ENCODE measurements at regions of chr15 and their contacts with region 1.

Region 1: GRCh38 chr15:40108855-40109735 is at the start of gene BMF:
- DNase-seq: peak; percentile 98 to 99
- H3K4me3 ChIP-seq: peak within 1 kb of the TSS; percentile 61
- H3K4me3 Mint-ChIP-seq: peak within 1 kb of the TSS; percentile 93
- H3K27ac Mint-ChIP-seq: peak within 1 kb of the TSS; percentile 96
- H3K4me1 ChIP-seq: peaks cover 34% of the 10 kb centered on the region
- H3K4me1 Mint-ChIP-seq: peaks cover 34% of the 10 kb centered on the region
- H3K27me3 ChIP-seq: no peaks in the 10 kb centered on the region
- H3K27me3 Mint-ChIP-seq: no peaks in the 10 kb centered on the region
- CTCF ChIP-seq: peak; percentile 33 to 54
- total RNA-seq, gene BMF: 78.2 and 81.5 TPM in 2 replicates

Region 2: DNA sequence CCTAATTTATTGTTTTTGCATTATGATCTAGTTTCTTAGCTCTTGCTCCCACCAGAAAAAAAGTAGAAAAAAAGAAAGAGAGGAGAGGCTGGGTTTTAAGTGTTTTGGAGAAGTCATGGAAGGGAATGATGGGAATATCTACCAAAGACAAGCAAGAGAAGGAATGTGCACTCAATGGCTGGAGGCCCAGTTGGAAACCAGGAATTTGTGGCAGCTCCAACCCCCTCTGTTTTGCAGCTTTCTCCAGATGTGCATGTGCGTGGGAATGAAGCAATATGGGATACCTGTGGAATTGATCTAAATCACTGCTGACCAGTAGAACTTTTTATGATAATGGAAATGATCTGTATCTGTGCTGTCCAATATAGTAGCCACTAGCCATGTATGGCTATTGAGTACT is 148.0 kb before region 1 on chr15:
- CTCF ChIA-PET with region 1: no interaction called
- POLR2A ChIA-PET with region 1: no interaction called
- intact Hi-C with region 1: no loop called
- DNase-seq: no peak
- H3K4me3 ChIP-seq: no peak overlapping the region
- H3K4me3 Mint-ChIP-seq: no peak overlapping the region
- H3K27ac Mint-ChIP-seq: no peak overlapping the region
- H3K4me1 ChIP-seq: no peaks in the 10 kb centered on the region
- H3K4me1 Mint-ChIP-seq: no peaks in the 10 kb centered on the region
- H3K27me3 ChIP-seq: no peaks in the 10 kb centered on the region
- H3K27me3 Mint-ChIP-seq: no peaks in the 10 kb centered on the region
- CTCF ChIP-seq: no peak

Region 3: DNA sequence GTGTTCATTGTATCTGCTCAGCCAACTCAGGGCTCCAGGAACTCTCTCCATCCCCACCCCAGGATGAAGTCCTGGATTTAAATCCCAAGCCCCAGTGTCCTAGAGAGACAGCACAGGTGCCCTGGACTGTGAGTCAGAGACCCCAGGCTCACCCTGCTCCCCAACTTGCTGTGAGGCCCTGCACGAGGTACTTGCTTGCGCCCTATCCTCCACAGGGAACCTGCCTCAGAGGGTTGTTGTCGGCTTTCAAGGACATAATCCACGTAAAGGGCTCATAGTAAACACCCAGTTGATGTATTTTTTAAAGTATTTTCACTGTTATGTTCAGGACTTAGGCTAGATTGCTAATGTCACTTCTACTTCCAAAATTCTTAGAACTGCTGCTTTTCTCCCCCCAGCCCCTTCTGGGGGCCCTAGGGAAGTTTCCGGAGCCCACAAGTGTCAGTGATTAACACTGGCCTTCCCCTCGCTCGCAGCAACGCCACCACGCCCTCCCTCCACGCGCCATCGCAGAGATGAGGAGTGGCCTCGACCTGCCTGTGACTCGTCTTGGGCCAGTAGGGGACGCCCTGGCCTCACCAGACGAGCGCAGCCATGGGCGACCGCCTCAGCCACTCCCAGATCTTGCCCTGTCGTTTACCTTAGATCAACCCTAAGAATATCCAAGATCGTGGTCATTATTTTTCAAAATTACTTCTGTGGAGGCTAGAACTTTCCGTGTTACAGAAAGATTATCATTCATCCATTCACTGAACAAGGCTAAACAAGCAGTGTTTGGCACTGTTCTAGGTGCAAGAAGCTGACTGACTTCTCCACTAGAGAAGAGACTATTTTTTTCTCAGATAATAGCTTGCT is 64.2 kb before region 1 on chr15:
- CTCF ChIA-PET with region 1: interaction called, 16 read pairs
- POLR2A ChIA-PET with region 1: interaction called, 3 read pairs
- intact Hi-C with region 1: loop called (anchors 1 kb)
- DNase-seq: peak; percentile 83 to 89
- H3K4me3 ChIP-seq: peak overlapping the region; percentile 19
- H3K4me3 Mint-ChIP-seq: peak overlapping the region; percentile 71
- H3K27ac Mint-ChIP-seq: peak overlapping the region; percentile 82
- H3K4me1 ChIP-seq: peaks cover 9% of the 10 kb centered on the region; the same call in 1 of the 2 replicates
- H3K4me1 Mint-ChIP-seq: peaks cover 22% of the 10 kb centered on the region
- H3K27me3 ChIP-seq: no peaks in the 10 kb centered on the region
- H3K27me3 Mint-ChIP-seq: no peaks in the 10 kb centered on the region
- CTCF ChIP-seq: peak; percentile 88

Region 4: GRCh38 chr15:40081691-40082194 is 27.4 kb before region 1 on chr15:
- CTCF ChIA-PET with region 1: interaction called, 6 read pairs
- POLR2A ChIA-PET with region 1: interaction called, 20 read pairs
- intact Hi-C with region 1: loop called (anchors 1 kb)
- DNase-seq: peak; percentile 77 to 85
- H3K4me3 ChIP-seq: peak overlapping the region; percentile 12; the same call in 1 of the 2 replicates
- H3K4me3 Mint-ChIP-seq: peak overlapping the region; percentile 85
- H3K27ac Mint-ChIP-seq: peak overlapping the region; percentile 98
- H3K4me1 ChIP-seq: peaks cover 55% of the 10 kb centered on the region
- H3K4me1 Mint-ChIP-seq: peaks cover 39% of the 10 kb centered on the region
- H3K27me3 ChIP-seq: no peaks in the 10 kb centered on the region
- H3K27me3 Mint-ChIP-seq: no peaks in the 10 kb centered on the region
- CTCF ChIP-seq: no peak

Region 5: GRCh38 chr15:40092256-40092978 is 16.7 kb before region 1 on chr15:
- CTCF ChIA-PET with region 1: interaction called, 8 read pairs
- POLR2A ChIA-PET with region 1: interaction called, 30 read pairs
- intact Hi-C with region 1: loop called (anchors 1 kb)
- DNase-seq: peak; percentile 58 to 78
- H3K4me3 ChIP-seq: no peak overlapping the region
- H3K4me3 Mint-ChIP-seq: peak overlapping the region; percentile 31
- H3K27ac Mint-ChIP-seq: peak overlapping the region; percentile 86
- H3K4me1 ChIP-seq: peaks cover 84% of the 10 kb centered on the region
- H3K4me1 Mint-ChIP-seq: peaks cover 53% of the 10 kb centered on the region
- H3K27me3 ChIP-seq: no peaks in the 10 kb centered on the region
- H3K27me3 Mint-ChIP-seq: no peaks in the 10 kb centered on the region
- CTCF ChIP-seq: no peak

Region 6: GRCh38 chr15:40098489-40099261 is 10.4 kb before region 1 on chr15:
- CTCF ChIA-PET with region 1: interaction called, 13 read pairs
- POLR2A ChIA-PET with region 1: interaction called, 30 read pairs
- intact Hi-C with region 1: loop called (anchors 1 kb)
- DNase-seq: peak; percentile 92 to 94
- H3K4me3 ChIP-seq: no peak overlapping the region
- H3K4me3 Mint-ChIP-seq: peak overlapping the region; percentile 65
- H3K27ac Mint-ChIP-seq: peak overlapping the region; percentile 92
- H3K4me1 ChIP-seq: peaks cover 89% of the 10 kb centered on the region
- H3K4me1 Mint-ChIP-seq: peaks cover 64% of the 10 kb centered on the region
- H3K27me3 ChIP-seq: no peaks in the 10 kb centered on the region
- H3K27me3 Mint-ChIP-seq: no peaks in the 10 kb centered on the region
- CTCF ChIP-seq: no peak

Region 7: DNA sequence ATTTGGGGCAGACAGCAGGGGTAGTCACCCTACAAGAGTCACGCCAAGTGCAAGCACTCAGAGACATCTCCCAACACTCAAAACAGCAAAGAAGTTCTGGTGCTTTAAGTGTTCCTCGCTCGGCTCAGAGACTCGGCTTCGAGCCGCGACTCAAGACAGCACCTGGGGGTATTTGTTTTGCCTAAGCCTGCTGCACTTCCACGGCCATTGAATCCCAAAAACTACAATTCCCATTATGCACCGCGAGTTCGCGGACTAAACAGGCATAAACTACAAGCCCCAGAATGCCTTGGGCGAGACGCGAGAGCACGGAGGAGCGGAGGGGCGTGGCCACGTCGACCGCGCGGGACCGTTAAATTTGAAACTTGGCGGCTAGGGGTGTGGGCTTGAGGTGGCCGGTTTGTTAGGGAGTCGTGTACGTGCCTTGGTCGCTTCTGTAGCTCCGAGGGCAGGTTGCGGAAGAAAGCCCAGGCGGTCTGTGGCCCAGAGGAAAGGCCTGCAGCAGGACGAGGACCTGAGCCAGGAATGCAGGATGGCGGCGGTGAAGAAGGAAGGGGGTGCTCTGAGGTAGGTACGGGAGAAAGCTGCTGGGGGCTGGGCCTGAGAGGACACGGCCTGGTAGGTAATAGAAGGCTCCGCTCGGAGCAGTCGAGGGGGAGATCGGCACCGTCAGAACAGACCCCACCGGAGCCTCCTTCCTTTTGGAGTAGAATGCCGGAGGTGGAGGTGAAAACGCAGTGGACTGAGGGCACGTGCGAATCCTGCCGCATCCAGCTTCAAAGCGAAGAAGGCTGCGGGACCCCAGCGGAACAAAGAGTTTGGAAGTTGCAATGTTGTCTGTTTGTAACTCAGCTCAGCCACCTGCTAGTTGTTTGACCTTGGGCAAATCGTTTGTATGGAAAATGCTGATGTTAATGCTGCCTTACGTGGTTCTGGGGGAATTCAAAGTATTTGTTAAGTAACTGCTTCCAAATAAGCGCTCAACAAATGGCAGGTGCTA is 51.9 kb after region 1 on chr15 and contains the start of gene BUB1B:
- CTCF ChIA-PET with region 1: interaction called, 3 read pairs
- POLR2A ChIA-PET with region 1: interaction called, 3 read pairs
- intact Hi-C with region 1: loop called (anchors 1 kb)
- DNase-seq: peak; percentile 95
- H3K4me3 ChIP-seq: peak within 1 kb of the TSS; percentile 82
- H3K4me3 Mint-ChIP-seq: no peak within 1 kb of the TSS
- H3K27ac Mint-ChIP-seq: no peak within 1 kb of the TSS
- H3K4me1 ChIP-seq: peaks cover 18% of the 10 kb centered on the region
- H3K4me1 Mint-ChIP-seq: peaks cover under 1% of the 10 kb centered on the region
- H3K27me3 ChIP-seq: no peaks in the 10 kb centered on the region
- H3K27me3 Mint-ChIP-seq: no peaks in the 10 kb centered on the region
- CTCF ChIP-seq: no peak
- total RNA-seq, gene BUB1B: 62.7 and 73.5 TPM in 2 replicates

Region 8: DNA sequence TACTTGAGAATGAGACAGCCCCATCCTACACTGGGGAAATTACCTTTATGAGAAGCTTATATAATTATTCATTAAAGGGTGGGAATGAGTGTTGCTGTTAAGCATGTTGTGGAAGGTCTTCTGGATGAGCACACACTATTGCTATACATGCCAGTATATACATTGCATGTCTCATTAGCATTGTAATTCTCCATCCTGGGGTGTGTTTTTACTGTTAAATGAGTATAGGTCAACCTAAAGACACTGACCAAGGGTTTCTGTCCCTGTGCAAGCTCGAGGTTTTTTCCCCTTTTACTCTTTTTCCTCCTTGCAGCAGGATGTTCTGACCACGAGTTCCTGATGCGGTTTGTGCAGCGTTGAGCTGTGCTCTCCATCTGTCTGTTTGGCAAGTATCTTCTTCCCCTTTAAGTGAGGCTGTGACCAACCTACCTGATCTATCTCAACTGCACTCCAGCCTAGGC is 289.3 kb after region 1 on chr15:
- CTCF ChIA-PET with region 1: no interaction called
- POLR2A ChIA-PET with region 1: no interaction called
- intact Hi-C with region 1: no loop called
- DNase-seq: no peak
- H3K4me3 ChIP-seq: no peak overlapping the region
- H3K4me3 Mint-ChIP-seq: no peak overlapping the region
- H3K27ac Mint-ChIP-seq: no peak overlapping the region
- H3K4me1 ChIP-seq: no peaks in the 10 kb centered on the region
- H3K4me1 Mint-ChIP-seq: no peaks in the 10 kb centered on the region
- H3K27me3 ChIP-seq: no peaks in the 10 kb centered on the region
- H3K27me3 Mint-ChIP-seq: no peaks in the 10 kb centered on the region
- CTCF ChIP-seq: no peak